CD14-positive monocyte (primary cell): ENCODE measurements at regions of chr19 and their contacts with region 1.

Region 1: DNA sequence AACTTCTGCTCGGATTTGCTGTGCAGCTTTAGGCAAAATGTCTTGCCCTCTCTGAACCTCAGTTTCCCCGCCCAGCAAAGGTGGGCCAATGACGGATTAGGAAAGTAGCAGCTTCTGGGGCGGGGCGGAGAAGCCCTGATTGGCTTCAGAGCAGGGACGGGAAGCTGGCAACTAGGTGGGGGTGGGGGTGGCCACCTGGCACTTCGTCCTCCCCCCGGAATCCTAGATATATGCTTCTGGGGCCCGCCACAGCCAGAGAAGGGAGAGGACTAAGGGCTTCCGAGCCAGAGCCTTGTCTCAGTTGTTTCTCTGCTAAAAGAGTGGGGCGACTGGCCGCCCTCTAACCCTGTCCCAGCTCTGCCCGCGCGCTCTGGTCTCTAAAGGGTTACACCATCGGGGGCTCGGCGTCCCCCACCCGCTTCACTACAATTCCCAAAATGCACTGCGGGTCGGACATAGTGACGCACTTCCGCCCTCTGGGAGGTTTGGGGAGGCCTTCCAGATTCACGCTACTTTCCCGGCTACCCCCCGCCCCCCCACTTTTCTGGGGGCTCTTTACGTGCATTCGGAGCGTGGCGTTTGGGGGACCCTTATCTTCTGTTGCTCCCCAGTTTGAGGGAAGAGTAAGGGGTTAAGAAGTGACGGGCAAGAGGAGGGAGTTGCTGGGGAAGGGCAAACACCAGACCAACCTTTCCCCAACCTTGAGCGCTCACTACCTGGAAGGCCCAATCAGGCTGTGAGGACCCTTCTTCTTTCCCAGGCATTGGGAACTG is 672 bp upstream of the IRF2BP1 start:
- DNase-seq: peak; percentile 85 to 89 (median 86)
- H3K4me3 ChIP-seq: peak overlapping the region; percentile 63 to 89 (median 83)
- H3K4me3 Mint-ChIP-seq: peak overlapping the region; percentile 96 to 98
- H3K27ac ChIP-seq: peak overlapping the region; percentile 89 to 94
- H3K27ac Mint-ChIP-seq: peak overlapping the region; percentile 96 to 99 (median 97)
- H3K4me1 ChIP-seq: peaks cover 30 to 42% of the 10 kb centered on the region in 2 donors
- H3K4me1 Mint-ChIP-seq: peaks cover 19% of the 10 kb centered on the region
- H3K27me3 ChIP-seq: peaks cover 0 to 10% of the 10 kb centered on the region in 2 donors
- H3K27me3 Mint-ChIP-seq: peaks cover 3 to 4% (median 3%) of the 10 kb centered on the region in 3 donors
- CTCF ChIP-seq: no peak

Region 2: GRCh38 chr19:45730389-45731288 is 156.0 kb before region 1 on chr19 and contains the start of gene FBXO46:
- intact Hi-C with region 1: loop called in 1 of 2 experiments (anchors 5 kb)
- DNase-seq: peak; percentile 95 to 96 (median 95)
- H3K4me3 ChIP-seq: peak within 1 kb of the TSS; percentile 70 to 90 (median 72)
- H3K4me3 Mint-ChIP-seq: peak within 1 kb of the TSS; percentile 84 to 97
- H3K27ac ChIP-seq: peak within 1 kb of the TSS; percentile 11 to 90
- H3K27ac Mint-ChIP-seq: peak within 1 kb of the TSS; percentile 87 to 97 (median 93)
- H3K4me1 ChIP-seq: peaks cover 14 to 19% of the 10 kb centered on the region in 2 donors
- H3K4me1 Mint-ChIP-seq: peaks cover 22% of the 10 kb centered on the region
- H3K27me3 ChIP-seq: no peaks in the 10 kb centered on the region
- H3K27me3 Mint-ChIP-seq: peaks cover 0 to under 1% (median 0%) of the 10 kb centered on the region in 3 donors
- CTCF ChIP-seq: no peak
- polyA plus RNA-seq, gene FBXO46: 3.8 to 6.8 (median 5.5) TPM

Region 3: DNA sequence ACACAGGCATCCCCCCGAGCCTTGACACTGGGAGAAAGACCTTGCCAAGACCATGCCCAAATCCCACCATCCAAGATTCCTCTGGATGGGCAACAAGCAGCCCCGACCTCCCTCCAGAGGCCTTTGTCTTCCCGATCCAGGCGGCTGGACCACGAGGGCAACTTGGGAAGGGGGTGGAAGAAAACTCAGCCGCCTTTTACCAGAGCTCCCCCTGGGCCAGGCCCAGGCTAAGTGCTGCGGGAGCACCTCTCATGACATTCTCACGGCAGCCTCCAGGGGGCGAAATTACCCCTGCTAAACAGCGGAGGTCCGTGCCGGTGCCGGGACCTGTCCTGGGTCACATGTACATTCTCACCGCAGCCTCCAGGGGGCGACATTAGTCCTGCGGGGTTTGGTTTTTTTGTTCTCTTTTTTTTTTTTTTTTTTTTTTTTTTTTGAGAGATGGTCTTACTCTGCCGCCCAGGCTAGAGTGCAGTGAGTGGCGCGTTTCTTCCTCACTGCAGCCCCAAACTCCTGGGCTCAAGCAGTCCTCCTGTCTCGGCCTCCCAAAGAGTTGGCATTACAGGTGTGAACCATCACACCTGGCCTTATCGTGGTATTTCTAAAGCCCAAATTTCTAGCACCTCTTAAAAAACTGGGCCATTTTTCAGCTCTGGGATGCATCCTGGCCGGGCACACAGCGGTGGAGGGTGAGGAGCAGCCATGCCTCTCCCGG is 69.4 kb before region 1 on chr19:
- intact Hi-C with region 1: loop called (anchors 5 kb)
- DNase-seq: peak; percentile 93 to 95 (median 95)
- H3K4me3 ChIP-seq: no peak overlapping the region
- H3K4me3 Mint-ChIP-seq: no peak overlapping the region
- H3K27ac ChIP-seq: no peak overlapping the region
- H3K27ac Mint-ChIP-seq: no peak overlapping the region
- H3K4me1 ChIP-seq: peaks cover 9 to 10% of the 10 kb centered on the region in 2 donors
- H3K4me1 Mint-ChIP-seq: peaks cover 6% of the 10 kb centered on the region
- H3K27me3 ChIP-seq: peaks cover 11 to 45% of the 10 kb centered on the region in 2 donors
- H3K27me3 Mint-ChIP-seq: peaks cover 40 to 52% (median 45%) of the 10 kb centered on the region in 3 donors
- CTCF ChIP-seq: peak; percentile 99

Region 4: GRCh38 chr19:45902651-45903625 is 16.3 kb after region 1 on chr19:
- intact Hi-C with region 1: loop called in 1 of 2 experiments (anchors 2 kb)
- DNase-seq: peak; percentile 97 to 98 (median 98)
- H3K4me3 ChIP-seq: peak overlapping the region; percentile 67 to 94 (median 93)
- H3K4me3 Mint-ChIP-seq: peak overlapping the region; percentile 80 to 95
- H3K27ac ChIP-seq: peak overlapping the region; percentile 75 to 79
- H3K27ac Mint-ChIP-seq: peak overlapping the region; percentile 37 to 92 (median 83)
- H3K4me1 ChIP-seq: peaks cover 19 to 31% of the 10 kb centered on the region in 2 donors
- H3K4me1 Mint-ChIP-seq: peaks cover 21% of the 10 kb centered on the region
- H3K27me3 ChIP-seq: no peaks in the 10 kb centered on the region
- H3K27me3 Mint-ChIP-seq: peaks cover 7 to 23% (median 23%) of the 10 kb centered on the region in 3 donors
- CTCF ChIP-seq: no peak

Region 5: GRCh38 chr19:46040952-46041500 is 154.4 kb after region 1 on chr19 and contains the start of gene IGFL4:
- intact Hi-C with region 1: no loop called
- DNase-seq: no peak
- H3K4me3 ChIP-seq: no peak within 1 kb of the TSS
- H3K4me3 Mint-ChIP-seq: peak within 1 kb of the TSS in 1 of 2 donors; percentile 40
- H3K27ac ChIP-seq: no peak within 1 kb of the TSS
- H3K27ac Mint-ChIP-seq: peak within 1 kb of the TSS in 2 of 7 donors; percentile 13 to 27
- H3K4me1 ChIP-seq: no peaks in the 10 kb centered on the region
- H3K4me1 Mint-ChIP-seq: no peaks in the 10 kb centered on the region
- H3K27me3 ChIP-seq: peaks cover 4 to 27% of the 10 kb centered on the region in 2 donors
- H3K27me3 Mint-ChIP-seq: peaks cover 22 to 51% (median 26%) of the 10 kb centered on the region in 3 donors
- CTCF ChIP-seq: no peak
- polyA plus RNA-seq, gene IGFL4: not detected

Region 6: GRCh38 chr19:46076951-46077816 is 190.6 kb after region 1 on chr19:
- intact Hi-C with region 1: no loop called
- DNase-seq: peak in 2 of 3 donors; percentile 18 to 58
- H3K4me3 ChIP-seq: no peak overlapping the region
- H3K4me3 Mint-ChIP-seq: peak overlapping the region in 1 of 2 donors; percentile 87
- H3K27ac ChIP-seq: no peak overlapping the region
- H3K27ac Mint-ChIP-seq: peak overlapping the region in 1 of 7 donors; percentile 20
- H3K4me1 ChIP-seq: peaks cover 5 to 17% of the 10 kb centered on the region in 2 donors
- H3K4me1 Mint-ChIP-seq: peaks cover 18% of the 10 kb centered on the region
- H3K27me3 ChIP-seq: peaks cover 54 to 80% of the 10 kb centered on the region in 2 donors
- H3K27me3 Mint-ChIP-seq: peaks cover 48 to 76% (median 69%) of the 10 kb centered on the region in 3 donors
- CTCF ChIP-seq: peak; percentile 52